Right ventricle myocardium inferior (tissue), 1 donor: ENCODE measurements at regions of chr1 and their contacts with region 1.

Region 1: GRCh38 chr1:23273450-23274133 is 56.3 kb upstream of the HTR1D start:
- DNase-seq: no peak
- ATAC-seq: no peak

Region 2: DNA sequence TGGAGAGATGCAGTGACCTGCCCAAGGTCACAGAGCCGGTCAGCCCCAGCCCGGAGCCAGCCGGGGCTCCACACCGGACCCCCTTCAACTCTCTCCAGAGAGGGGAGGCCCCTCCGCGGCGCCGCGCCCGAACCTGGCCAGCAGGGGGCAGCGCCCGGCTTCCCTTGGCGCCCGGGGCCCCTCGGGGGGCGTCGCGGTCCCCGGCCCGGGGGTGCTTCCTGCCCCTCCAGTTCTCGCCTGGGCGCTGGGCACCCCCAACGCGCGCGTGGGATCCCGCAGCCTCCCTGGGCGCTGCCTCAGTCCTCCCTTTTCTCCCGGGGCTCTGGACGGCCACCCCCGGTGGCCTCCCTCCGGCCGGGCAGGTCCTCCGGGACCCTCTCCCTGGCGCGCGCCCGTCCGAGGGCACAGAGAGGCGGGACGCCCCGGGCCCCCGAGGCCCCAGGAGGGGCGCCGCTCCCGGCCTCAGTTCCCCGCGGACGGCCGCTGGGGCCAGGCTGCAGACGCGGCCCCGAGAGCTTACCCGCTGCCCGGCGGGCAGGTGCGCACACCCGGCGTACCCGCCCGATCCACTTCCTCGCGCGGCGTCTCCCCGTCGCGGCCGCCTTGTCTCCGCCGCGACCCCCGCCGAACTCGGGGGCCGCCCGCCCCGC is 56.7 kb before region 1 on chr1:
- intact Hi-C with region 1: loop called (anchors 10 kb)
- DNase-seq: no peak
- ATAC-seq: no peak

Region 3: DNA sequence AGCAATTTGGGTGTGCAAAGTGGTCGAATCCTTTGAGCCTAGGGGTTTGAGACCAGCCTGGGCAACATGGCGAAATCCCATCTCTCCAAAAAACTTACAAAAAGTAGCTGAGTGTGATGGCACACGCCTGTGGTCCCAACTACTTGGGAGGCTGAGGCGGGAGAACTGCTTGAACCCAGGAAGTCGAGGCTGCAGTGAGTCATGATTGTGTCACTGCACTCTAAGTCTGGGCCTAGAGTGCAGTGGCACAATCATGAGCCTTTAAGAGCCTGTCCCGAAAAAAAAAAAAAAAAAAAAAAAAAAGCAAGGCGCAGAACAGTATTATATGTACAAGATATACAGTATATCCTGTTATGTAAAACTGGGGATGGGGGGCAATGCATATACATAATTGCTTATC is 31.2 kb before region 1 on chr1:
- intact Hi-C with region 1: no loop called
- DNase-seq: no peak
- ATAC-seq: no peak